KBM-7 (cell line): ENCODE measurements at regions of chr7 and their contacts with region 1.

Region 1: DNA sequence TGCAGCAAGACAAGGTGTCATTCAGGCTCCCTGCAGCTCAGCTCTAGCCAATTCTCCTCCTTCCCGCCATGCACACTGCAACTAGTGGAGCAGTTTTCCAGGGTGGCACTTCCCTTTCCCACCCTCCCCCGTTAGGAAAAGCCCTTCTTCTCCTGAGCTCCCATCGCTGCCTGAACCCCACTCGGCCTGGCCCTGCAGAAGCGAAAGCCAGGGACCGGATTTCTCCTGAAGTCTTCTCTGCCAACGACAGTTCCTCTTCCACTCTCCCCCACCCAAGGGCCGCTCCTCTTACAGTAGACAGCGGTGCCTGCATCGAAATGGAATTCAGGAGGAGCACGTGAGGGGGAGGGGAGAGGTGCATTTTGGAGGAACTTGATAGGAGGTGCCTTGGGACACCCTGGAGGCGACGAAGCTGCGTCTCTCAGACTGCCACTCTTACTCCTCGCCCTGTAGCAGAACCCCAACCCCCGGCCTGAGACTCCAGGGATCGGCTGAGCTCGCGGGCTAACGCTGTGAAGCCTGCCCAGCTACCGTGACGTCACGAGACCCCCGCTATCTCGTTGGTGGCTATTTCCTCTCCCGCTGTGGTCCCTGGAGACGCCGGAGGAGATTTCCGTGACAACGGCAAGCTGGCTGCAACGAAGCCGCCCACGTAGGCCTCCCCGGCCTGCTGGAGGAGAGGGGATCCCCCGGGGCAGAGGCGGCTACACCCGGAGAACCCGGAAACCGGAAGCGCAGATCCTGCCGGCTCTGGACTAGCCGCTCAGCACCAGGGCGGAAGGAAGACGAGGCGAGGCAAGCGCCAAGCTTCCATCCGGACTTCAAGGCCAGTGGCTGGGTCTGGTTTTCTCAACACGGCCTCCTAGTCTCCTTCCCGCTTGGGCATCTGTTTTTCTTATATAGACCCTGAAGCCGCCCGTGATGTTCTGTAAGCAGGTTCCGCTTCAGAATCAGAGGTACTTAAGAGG is 109.7 kb downstream of the RALA start:
- DNase-seq: peak; percentile 96

Region 2: DNA sequence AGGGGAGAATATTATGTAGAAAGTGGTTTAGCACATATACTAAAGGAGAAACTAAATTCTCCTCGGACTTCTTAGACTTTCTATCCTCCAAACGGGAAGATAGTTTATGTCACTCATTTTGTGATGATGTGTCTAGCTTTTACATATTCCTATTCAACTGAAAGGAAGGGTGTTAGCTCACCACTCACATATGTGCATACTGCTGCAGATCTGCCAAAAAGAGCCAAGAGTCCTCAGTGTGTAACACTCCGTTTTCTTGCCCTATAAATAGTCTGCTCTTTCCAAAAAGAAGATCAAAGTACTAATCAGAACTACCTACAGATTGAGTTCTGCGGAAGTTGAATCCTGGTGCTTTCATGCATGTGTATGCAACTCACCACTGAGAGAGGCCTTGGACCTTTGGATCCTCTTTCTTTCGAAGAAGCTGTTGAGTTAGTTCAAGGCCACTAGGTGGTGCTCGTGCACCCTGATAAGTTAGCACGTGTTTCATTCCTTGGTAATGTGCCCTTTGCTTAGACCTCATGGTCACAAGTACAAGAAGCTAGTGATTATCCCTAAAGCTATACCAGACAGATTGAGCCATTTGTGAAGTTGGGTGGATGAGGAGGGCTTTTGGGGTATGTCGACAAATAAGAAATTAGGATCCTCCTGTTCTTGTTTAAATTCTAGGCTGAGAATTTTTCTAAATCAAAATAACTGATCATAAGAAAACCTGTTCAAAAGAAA is 152.8 kb before region 1 on chr7:
- in situ Hi-C with region 1: loop called (anchors 25 kb)
- DNase-seq: peak; percentile 81